A673 (cell line): ENCODE measurements at regions of chr16 and their contacts with region 1.

Region 1: DNA sequence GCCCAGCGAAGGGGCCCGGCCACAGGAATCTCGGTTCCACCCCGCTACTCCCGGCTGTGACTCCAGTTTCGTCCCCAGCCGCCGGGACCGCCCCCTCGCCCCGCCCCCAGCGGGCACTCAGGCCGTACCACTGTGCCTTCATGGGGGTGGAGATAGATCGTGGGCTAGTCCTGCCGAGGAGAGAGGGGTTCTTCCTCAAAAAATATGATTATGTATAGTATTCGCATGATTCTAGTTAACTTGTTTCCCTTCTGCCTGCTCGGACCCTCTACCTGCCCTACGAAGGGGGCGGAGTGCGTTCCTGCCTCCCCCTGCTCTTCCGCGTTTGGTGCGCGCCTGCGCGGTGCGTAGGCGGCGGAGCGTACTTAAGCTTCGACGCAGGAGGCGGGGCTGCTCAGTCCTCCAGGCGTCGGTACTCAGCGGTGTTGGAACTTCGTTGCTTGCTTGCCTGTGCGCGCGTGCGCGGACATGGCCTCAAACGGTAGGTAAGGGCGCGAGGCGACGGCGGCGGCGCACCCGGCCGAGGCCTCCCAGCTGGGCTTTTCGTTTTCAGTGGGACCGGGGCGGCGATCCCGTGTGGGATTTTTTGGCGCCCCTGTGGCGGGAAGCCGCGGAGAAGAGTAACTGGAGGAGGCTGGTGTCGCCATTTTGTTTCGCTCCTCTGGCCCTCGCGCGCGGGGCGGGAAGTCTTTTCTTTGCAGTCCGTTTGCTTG is at the start of gene FUS:
- DNase-seq: peak; percentile 88
- H3K4me3 ChIP-seq: peak within 1 kb of the TSS; percentile 88
- H3K27ac ChIP-seq: peak within 1 kb of the TSS; percentile 100
- H3K4me1 ChIP-seq: peaks cover 12% of the 10 kb centered on the region
- H3K27me3 ChIP-seq: no peaks in the 10 kb centered on the region
- CTCF ChIP-seq: no peak
- total RNA-seq, gene FUS: 1,134 and 1,264 TPM in 2 replicates

Region 2: GRCh38 chr16:31117391-31118197 is 62.3 kb before region 1 on chr16 and contains the start of gene KAT8:
- CTCF ChIA-PET with region 1: no interaction called
- POLR2A ChIA-PET with region 1: interaction called, 10 read pairs
- intact Hi-C with region 1: no loop called
- DNase-seq: peak; percentile 100
- H3K4me3 ChIP-seq: peak within 1 kb of the TSS; percentile 74
- H3K27ac ChIP-seq: peak within 1 kb of the TSS; percentile 79
- H3K4me1 ChIP-seq: peaks cover 6% of the 10 kb centered on the region
- H3K27me3 ChIP-seq: no peaks in the 10 kb centered on the region
- CTCF ChIP-seq: no peak
- total RNA-seq, gene KAT8: 65.4 and 70.6 TPM in 2 replicates

Region 3: GRCh38 chr16:31128711-31129567 is 51.0 kb before region 1 on chr16:
- CTCF ChIA-PET with region 1: no interaction called
- POLR2A ChIA-PET with region 1: no interaction called
- intact Hi-C with region 1: no loop called
- DNase-seq: no peak
- H3K4me3 ChIP-seq: no peak overlapping the region
- H3K27ac ChIP-seq: no peak overlapping the region
- H3K4me1 ChIP-seq: no peaks in the 10 kb centered on the region
- H3K27me3 ChIP-seq: no peaks in the 10 kb centered on the region
- CTCF ChIP-seq: no peak